ENCODE measurements at regions of chr9 and their contacts with region 1.

Region 1: DNA sequence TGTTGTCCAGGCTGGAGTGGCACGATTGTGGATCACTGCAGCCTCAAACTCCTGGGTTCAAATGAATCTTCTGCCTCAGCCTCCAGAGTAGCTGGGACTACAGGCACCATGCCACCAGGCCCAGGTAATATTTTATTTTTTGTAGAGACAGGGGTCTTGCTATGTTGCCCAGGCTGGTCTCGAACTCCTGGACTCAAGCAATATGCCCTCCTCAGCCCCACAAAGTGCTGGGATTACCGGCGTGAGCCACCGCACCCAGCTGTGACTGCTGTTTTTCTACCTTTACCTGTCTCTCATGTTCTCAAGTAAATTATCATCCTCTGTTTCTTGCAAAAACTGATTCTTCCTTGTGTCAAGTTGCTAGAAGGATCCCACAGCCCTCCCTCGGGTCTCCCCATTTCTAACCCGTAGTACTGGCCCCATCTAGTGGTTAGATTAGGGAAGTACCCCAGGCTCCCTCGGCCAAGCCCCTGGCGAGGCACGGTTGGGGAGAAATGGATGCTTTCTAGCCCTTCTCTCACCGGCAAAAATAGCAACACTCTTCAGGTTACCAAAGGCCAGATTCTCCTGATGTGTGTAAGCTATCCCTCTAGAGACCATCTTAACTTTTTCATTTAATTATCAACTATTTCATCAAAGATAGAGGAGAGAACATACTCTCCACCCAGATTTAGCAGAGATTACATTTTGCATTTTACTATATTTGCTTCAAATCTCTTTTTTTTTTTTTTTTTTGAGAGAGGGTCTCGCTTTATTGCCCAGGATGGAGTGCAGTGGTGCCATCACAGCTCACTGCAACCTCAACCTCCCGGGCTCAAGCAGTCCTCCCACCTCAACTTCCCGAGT is 19.2 kb upstream of the TOR1B start:
- DNase-seq: peak; percentile 50 to 84
- ATAC-seq: peak; percentile 93 to 100 (median 99)
- H3K4me3 ChIP-seq: no peak overlapping the region
- H3K4me3 Mint-ChIP-seq: no peak overlapping the region
- H3K27ac ChIP-seq: no peak overlapping the region
- H3K27ac Mint-ChIP-seq: no peak overlapping the region
- H3K4me1 ChIP-seq: no peaks in the 10 kb centered on the region
- H3K4me1 Mint-ChIP-seq: peaks cover 0 to 6% of the 10 kb centered on the region in 2 donors
- H3K27me3 ChIP-seq: no peaks in the 10 kb centered on the region
- H3K27me3 Mint-ChIP-seq: peaks cover 23 to 27% of the 10 kb centered on the region in 2 donors
- CTCF ChIP-seq: peak; percentile 84

Region 2: DNA sequence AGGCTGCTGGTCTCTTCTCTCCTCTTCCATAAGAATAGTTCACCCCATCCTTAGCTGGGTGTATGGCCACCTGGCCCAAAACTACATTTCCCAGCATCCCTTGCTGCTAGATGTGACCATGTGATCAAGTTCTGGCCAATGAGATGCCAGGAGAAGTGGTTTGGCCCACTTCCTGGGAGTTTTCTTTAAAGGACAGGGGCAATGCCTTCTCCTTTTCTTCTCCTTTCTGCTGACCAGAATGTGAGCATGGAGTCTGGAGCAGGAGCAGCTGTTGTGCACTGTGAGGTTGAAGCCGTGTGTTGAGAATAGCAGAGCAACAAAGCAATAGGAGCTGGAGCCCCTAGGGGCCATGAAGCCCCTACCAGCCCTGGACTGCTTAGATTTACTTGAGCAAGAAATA is 199.6 kb before region 1 on chr9:
- intact Hi-C with region 1: no loop called
- DNase-seq: peak in 1 of 2 donors; percentile 86
- ATAC-seq: peak; percentile 61 to 87 (median 69)
- H3K4me3 ChIP-seq: no peak overlapping the region
- H3K4me3 Mint-ChIP-seq: no peak overlapping the region
- H3K27ac ChIP-seq: peak overlapping the region; percentile 18
- H3K27ac Mint-ChIP-seq: peak overlapping the region; percentile 74 to 79
- H3K4me1 ChIP-seq: peaks cover 55% of the 10 kb centered on the region
- H3K4me1 Mint-ChIP-seq: peaks cover 8 to 17% of the 10 kb centered on the region in 2 donors
- H3K27me3 ChIP-seq: no peaks in the 10 kb centered on the region
- H3K27me3 Mint-ChIP-seq: peaks cover 0 to 5% of the 10 kb centered on the region in 2 donors
- CTCF ChIP-seq: no peak

Region 3: DNA sequence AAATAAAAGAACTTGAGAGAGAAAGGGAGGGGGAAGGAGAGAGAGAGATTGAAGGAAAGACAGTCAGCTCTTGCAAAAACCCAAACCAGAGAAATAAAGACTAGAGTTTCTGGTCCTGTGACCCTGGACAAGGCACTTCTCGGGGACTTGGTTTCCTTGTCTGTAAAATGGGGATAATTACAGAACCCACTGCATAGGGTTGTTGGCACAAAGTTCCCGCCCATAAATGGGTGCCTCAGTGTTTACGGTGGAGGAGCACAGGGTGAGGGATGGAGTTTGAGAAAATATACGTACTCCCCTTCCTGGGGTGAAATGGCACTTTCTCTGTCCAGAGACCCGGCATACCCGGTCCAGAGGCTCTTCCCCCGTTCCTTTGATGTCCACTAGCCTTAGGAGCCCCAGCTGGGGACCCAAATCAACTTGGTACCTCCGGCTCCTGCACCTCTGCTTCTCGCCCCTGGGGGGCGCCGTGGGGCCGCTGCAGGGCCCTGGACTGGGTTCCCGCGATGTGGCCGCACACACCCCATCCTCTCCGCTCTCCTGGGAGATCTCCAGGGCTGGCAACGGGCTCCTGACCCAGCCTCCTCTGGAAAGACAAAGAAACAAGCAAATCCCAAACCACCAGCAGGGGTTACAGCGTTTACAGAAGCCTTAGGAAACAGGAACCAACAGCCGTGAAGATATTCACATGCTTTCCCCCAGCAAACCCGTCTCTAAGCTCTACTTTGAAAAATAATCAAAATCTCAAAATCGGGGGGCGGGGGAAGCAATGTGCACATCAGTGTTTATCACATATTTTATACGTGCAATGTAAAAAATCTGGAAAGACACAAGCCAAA is 57.2 kb before region 1 on chr9:
- intact Hi-C with region 1: loop called (anchors 2 kb)
- DNase-seq: peak; percentile 49 to 75
- ATAC-seq: peak; percentile 79 to 95 (median 93)
- H3K4me3 ChIP-seq: no peak overlapping the region
- H3K4me3 Mint-ChIP-seq: no peak overlapping the region
- H3K27ac ChIP-seq: no peak overlapping the region
- H3K27ac Mint-ChIP-seq: no peak overlapping the region
- H3K4me1 ChIP-seq: peaks cover 4% of the 10 kb centered on the region
- H3K4me1 Mint-ChIP-seq: peaks cover 0 to 5% of the 10 kb centered on the region in 2 donors
- H3K27me3 ChIP-seq: no peaks in the 10 kb centered on the region
- H3K27me3 Mint-ChIP-seq: peaks cover 0 to 6% of the 10 kb centered on the region in 2 donors
- CTCF ChIP-seq: peak; percentile 74